Psoas muscle (tissue), 8 donors: ENCODE measurements at regions of chr16 and their contacts with region 1.

Region 1: DNA sequence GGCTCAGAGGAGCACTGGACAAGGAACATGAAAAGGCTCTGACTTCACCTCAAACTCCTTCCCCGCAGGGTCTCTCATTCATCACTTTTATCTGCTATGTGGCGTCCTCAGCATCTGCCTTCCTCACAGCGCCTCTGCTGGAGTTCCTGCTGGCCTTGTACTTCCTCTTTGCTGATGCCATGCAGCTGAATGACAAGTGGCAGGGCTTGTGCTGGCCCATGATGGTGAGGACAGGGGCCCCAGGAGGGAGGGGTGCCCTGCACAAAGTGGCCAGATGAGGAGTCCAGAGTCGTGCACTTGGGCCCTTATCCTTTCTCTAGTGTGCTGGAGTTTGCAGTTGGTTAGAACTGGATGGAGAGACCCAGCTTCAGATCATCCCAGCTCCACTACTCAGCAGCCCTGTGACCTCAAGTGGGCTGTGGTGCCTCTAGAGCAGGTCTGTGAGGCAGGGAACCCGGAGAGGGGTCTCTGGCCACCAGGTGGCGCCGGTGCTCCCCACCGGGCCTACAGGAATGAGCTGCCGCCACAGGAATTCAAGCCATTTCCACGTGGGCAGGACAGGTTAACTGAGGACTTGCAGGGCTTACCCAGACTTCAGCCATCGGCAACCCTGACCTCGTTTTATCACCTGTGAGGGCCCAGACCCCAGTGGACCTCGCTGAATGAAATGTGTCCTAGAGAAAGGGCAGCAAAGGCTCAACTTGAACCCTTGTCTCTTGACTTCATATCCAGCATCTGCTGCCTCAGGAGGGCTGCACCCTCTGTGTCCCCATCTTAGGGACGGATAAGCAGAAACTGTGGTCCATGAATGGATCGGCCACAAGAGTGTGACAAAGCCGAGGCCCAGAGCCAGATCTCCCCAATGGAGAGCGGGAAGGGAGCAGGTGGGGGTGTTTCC is 4.0 kb downstream of the CMTM3 start:
- DNase-seq: peak; percentile 90 to 92
- ATAC-seq: peak; percentile 86 to 92 (median 90)
- H3K4me3 ChIP-seq: no peak overlapping the region
- H3K27ac ChIP-seq: no peak overlapping the region
- H3K4me1 ChIP-seq: no peaks in the 10 kb centered on the region
- H3K27me3 ChIP-seq: peaks cover 0 to 10% (median 7%) of the 10 kb centered on the region in 3 donors
- CTCF ChIP-seq: peak; percentile 92

Region 2: DNA sequence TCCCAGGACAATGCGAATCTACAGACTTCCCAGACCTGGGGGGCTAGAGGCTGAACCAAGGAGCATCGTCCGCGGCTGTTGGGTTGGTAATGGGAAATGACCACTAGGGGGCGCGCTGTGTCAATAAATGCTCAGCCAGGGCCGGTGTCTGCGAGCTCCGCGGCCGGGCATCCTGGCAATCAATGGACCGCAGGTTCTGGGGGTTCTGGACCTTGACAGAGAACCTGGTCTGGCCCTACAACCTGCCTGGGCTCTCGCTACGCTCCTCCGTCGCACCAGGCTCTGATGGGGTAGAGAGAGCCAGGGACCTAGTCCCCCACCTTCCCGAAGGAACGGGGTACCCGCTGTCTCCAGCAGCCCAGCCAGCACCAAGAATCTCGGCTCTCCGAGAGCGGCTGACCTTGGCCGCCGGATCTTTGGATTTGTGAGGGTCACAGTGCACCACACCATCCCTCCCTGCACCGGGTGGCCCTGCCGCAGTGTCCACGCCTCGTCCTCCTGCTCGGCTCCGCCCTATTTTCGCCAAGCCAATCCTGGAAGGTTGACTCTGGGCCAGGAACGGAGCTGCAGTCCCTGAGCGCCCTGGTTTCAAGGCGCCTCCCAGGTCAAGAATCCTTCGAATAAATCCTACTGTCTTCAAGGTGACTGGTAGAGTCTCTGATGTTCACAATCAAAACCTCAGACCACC is 201.8 kb before region 1 on chr16:
- intact Hi-C with region 1: loop called (anchors 2 to 10 kb)
- DNase-seq: peak; percentile 85 to 91
- ATAC-seq: peak; percentile 88 to 97 (median 91)
- H3K4me3 ChIP-seq: peak overlapping the region; percentile 64
- H3K27ac ChIP-seq: no peak overlapping the region
- H3K4me1 ChIP-seq: no peaks in the 10 kb centered on the region
- H3K27me3 ChIP-seq: peaks cover 0 to 16% (median 0%) of the 10 kb centered on the region in 3 donors
- CTCF ChIP-seq: peak; percentile 89

Region 3: DNA sequence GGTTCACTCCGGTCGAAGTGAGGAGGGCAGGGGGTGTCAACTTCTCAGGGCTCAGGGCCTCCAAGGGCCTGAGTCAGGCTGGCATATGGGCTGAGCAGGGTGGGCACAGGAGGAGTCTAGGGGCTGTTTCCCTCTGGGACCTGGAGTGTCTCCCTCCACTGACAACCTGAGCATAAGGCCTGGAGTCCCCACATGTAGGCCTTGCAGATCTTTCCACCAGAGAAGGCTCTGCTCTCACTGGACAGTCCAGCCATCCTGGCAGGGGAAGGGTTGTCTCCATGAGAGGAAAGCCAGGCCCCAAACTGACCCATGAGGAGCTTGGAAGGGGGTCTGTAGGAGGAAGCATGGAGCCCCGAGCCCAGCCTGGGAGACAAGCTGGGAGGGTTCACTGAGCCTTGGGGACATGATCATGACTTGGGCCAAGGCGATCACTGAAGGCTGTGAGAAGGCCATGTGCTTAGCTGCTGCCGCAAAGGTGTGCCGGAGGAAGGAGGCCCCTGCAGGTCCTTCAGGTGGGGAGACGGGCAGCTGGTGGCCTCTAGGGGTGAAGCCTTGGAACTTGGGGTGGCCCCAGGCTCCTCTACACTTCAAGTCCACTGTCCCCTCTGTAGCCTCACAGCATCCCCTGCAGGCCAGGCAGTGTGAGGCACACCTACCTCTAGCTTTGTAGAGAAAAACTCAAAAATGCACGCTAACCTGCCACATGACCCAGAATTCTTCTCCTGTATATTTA is 19.3 kb before region 1 on chr16:
- intact Hi-C with region 1: no loop called
- DNase-seq: peak; percentile 36 to 70
- ATAC-seq: peak; percentile 46 to 76 (median 58)
- H3K4me3 ChIP-seq: no peak overlapping the region
- H3K27ac ChIP-seq: no peak overlapping the region
- H3K4me1 ChIP-seq: no peaks in the 10 kb centered on the region
- H3K27me3 ChIP-seq: no peaks in the 10 kb centered on the region
- CTCF ChIP-seq: peak; percentile 35